ENCODE measurements at regions of chr14 and their contacts with region 1.

Region 1: DNA sequence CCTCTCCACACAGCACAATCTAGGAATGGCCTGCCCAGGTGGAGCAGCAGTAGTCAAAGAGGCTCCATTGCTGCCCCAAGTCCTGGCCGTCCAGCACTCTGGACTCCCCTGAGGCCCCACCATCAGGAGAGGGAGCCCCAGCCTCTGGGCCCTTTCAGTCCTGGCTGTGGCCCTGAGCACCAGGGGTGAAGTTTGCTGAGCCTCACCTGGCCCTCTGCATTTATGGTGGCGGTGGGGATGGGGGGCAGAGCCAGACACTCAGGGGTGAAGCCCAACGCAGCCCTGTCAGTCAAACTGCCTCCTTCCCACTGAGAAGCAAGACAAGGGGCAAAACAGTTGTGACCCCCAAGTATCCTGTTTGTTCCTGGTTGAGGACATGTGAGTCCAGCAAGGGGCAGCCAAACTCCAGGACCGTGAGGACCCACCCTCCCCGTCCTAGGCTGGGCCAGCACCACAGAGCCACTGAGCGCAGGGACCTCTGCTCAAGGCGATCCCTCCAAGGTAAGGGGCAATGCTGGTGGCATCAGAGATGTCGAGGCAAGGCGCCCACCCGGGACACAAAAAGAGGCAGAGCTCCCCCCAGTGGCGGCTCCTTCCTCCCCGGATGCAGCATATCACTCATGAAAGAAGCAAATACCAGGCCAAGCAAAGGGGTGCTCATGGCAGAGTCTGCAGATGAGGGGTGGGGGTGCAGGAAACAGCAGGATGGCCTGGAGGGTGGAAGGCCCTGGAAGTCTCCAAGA is 4.8 kb upstream of the AMN start:
- DNase-seq: peak in 1 of 2 experiments; percentile 60
- H3K4me3 ChIP-seq: no peak overlapping the region
- H3K4me3 Mint-ChIP-seq: no peak overlapping the region
- H3K27ac Mint-ChIP-seq: no peak overlapping the region
- H3K4me1 ChIP-seq: peaks cover 7% of the 10 kb centered on the region; the same call in 1 of the 2 replicates
- H3K4me1 Mint-ChIP-seq: no peaks in the 10 kb centered on the region
- H3K27me3 ChIP-seq: no peaks in the 10 kb centered on the region
- H3K27me3 Mint-ChIP-seq: no peaks in the 10 kb centered on the region
- CTCF ChIP-seq: peak; percentile 53 to 66

Region 2: GRCh38 chr14:102849526-102850379 is 67.9 kb before region 1 on chr14:
- CTCF ChIA-PET with region 1: no interaction called
- POLR2A ChIA-PET with region 1: no interaction called
- intact Hi-C with region 1: loop called (anchors 2 kb)
- DNase-seq: peak in 1 of 2 experiments; percentile 47
- H3K4me3 ChIP-seq: no peak overlapping the region
- H3K4me3 Mint-ChIP-seq: peak overlapping the region; percentile 56
- H3K27ac Mint-ChIP-seq: peak overlapping the region; percentile 71
- H3K4me1 ChIP-seq: peaks cover 10% of the 10 kb centered on the region; the same call in 1 of the 2 replicates
- H3K4me1 Mint-ChIP-seq: peaks cover 13% of the 10 kb centered on the region
- H3K27me3 ChIP-seq: no peaks in the 10 kb centered on the region
- H3K27me3 Mint-ChIP-seq: no peaks in the 10 kb centered on the region
- CTCF ChIP-seq: no peak

Region 3: GRCh38 chr14:102878174-102878969 is 39.3 kb before region 1 on chr14:
- CTCF ChIA-PET with region 1: no interaction called
- POLR2A ChIA-PET with region 1: interaction called, 3 read pairs
- intact Hi-C with region 1: loop called (anchors 5 kb)
- DNase-seq: peak in 1 of 2 experiments; percentile 43
- H3K4me3 ChIP-seq: no peak overlapping the region
- H3K4me3 Mint-ChIP-seq: no peak overlapping the region
- H3K27ac Mint-ChIP-seq: no peak overlapping the region
- H3K4me1 ChIP-seq: peaks cover 17% of the 10 kb centered on the region
- H3K4me1 Mint-ChIP-seq: peaks cover 12% of the 10 kb centered on the region
- H3K27me3 ChIP-seq: no peaks in the 10 kb centered on the region
- H3K27me3 Mint-ChIP-seq: no peaks in the 10 kb centered on the region
- CTCF ChIP-seq: peak in 1 of 2 experiments; percentile 8

Region 4: GRCh38 chr14:103002578-103003350 is 85.1 kb after region 1 on chr14:
- CTCF ChIA-PET with region 1: no interaction called
- POLR2A ChIA-PET with region 1: no interaction called
- intact Hi-C with region 1: no loop called
- DNase-seq: no peak
- H3K4me3 ChIP-seq: no peak overlapping the region
- H3K4me3 Mint-ChIP-seq: no peak overlapping the region
- H3K27ac Mint-ChIP-seq: no peak overlapping the region
- H3K4me1 ChIP-seq: no peaks in the 10 kb centered on the region
- H3K4me1 Mint-ChIP-seq: no peaks in the 10 kb centered on the region
- H3K27me3 ChIP-seq: no peaks in the 10 kb centered on the region
- H3K27me3 Mint-ChIP-seq: no peaks in the 10 kb centered on the region
- CTCF ChIP-seq: no peak